Activated CD4-positive, alpha-beta T cell treated with anti-CD3 and anti-CD28 coated beads, Interleukin-2, amount 10 ng/mL, durations not matched to agents 24 days and 14 days (primary cell): ENCODE measurements at regions of chr12 and their contacts with region 1.

Region 1: DNA sequence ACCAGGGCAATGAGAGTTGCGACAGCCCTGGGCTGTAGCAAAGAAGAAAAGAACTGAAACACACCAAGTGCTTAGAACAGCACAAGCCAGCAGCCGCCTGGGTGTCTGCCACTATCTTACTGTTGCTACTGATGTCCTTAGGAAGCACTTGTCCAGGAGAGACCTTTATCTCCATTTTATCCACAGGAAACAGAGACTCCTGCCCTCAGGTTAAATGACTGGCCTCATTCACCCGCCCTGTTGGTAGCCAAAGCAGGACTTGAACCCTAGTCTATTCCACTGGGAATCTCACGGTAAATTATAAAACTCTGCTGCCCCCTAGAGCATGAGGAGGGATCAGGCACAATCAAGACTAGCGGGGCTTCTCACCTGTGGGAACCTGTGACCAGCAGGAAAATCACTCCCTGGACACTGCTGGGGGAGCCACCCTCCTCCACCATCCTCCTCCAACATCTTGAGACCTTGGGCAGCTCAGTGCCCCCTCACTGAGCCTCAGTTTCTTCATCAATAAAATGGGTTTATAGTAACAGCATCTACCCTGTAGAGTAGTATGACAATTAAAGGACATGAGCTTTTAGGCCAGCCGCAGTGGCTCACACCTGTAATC is 20.5 kb upstream of the TESC start:
- DNase-seq: peak; percentile 81
- H3K4me3 Mint-ChIP-seq: no peak overlapping the region
- H3K27ac Mint-ChIP-seq: no peak overlapping the region
- H3K4me1 Mint-ChIP-seq: peaks cover 5% of the 10 kb centered on the region
- H3K27me3 Mint-ChIP-seq: no peaks in the 10 kb centered on the region

Region 2: GRCh38 chr12:117025481-117026151 is 94.1 kb before region 1 on chr12:
- intact Hi-C with region 1: loop called (anchors 1 kb)
- DNase-seq: peak; percentile 83
- H3K4me3 Mint-ChIP-seq: no peak overlapping the region
- H3K27ac Mint-ChIP-seq: peak overlapping the region; percentile 75
- H3K4me1 Mint-ChIP-seq: peaks cover 2% of the 10 kb centered on the region
- H3K27me3 Mint-ChIP-seq: no peaks in the 10 kb centered on the region